Ascending aorta (tissue), 2 donors: ENCODE measurements at regions of chr5 and their contacts with region 1.

Region 1: DNA sequence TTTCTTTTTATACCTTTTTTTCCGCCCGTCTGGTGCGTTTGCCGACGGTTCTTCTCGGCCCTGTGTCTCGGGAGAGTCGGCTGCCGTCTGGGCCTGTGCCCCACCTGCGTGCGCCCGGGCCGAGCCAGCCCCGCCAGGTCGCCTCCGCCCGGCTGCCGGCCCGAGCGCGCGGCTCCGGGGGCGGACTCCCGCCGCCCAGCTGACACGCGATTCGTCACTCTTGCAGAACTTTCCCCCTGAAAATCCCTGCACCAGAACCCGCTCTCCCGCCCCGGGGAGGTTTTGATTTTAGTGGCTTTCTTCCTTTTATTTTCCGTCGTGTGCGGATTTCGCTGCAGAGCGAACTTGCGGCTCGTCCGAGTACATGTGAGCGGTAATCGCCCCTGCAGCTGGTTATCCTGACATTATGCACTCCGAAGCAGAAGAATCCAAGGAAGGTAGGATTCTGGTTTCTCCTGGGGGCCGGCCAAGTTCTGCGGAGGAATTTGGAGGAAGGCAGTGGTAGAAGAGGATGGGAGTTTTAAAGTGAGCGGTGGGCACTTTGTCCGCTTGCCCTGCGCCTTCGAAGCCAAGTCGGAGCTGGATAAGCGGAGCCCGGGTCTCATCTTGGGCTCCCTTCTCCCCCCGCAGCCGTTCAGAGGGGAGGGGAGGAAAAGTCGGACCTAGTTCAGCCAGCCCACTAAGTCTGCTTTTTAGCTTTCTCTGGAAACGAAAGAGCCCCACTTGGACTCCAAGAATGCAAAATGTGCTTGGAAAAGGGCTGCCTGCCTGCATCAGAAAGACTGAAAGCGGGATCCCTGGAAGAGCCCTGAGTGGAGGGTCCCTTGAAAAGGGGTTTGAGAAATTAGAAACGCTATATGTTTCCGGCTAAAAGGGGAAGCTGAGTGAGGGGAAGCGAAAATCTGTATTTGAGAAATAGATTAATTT is at the start of gene TNFAIP8:
- DNase-seq: peak in 1 of 2 donors; percentile 83
- H3K4me3 ChIP-seq: peak within 1 kb of the TSS; percentile 74 to 87
- H3K27ac ChIP-seq: peak within 1 kb of the TSS; percentile 73
- H3K4me1 ChIP-seq: peaks cover 4 to 15% of the 10 kb centered on the region in 2 donors
- H3K27me3 ChIP-seq: no peaks in the 10 kb centered on the region
- CTCF ChIP-seq: no peak
- total RNA-seq, gene TNFAIP8: 3.5 TPM

Region 2: GRCh38 chr5:119367502-119368237 is 11.7 kb after region 1 on chr5:
- intact Hi-C with region 1: no loop called
- DNase-seq: no peak
- H3K4me3 ChIP-seq: no peak overlapping the region
- H3K27ac ChIP-seq: peak overlapping the region; percentile 48 to 76
- H3K4me1 ChIP-seq: peaks cover 4 to 45% of the 10 kb centered on the region in 2 donors
- H3K27me3 ChIP-seq: no peaks in the 10 kb centered on the region
- CTCF ChIP-seq: no peak

Region 3: DNA sequence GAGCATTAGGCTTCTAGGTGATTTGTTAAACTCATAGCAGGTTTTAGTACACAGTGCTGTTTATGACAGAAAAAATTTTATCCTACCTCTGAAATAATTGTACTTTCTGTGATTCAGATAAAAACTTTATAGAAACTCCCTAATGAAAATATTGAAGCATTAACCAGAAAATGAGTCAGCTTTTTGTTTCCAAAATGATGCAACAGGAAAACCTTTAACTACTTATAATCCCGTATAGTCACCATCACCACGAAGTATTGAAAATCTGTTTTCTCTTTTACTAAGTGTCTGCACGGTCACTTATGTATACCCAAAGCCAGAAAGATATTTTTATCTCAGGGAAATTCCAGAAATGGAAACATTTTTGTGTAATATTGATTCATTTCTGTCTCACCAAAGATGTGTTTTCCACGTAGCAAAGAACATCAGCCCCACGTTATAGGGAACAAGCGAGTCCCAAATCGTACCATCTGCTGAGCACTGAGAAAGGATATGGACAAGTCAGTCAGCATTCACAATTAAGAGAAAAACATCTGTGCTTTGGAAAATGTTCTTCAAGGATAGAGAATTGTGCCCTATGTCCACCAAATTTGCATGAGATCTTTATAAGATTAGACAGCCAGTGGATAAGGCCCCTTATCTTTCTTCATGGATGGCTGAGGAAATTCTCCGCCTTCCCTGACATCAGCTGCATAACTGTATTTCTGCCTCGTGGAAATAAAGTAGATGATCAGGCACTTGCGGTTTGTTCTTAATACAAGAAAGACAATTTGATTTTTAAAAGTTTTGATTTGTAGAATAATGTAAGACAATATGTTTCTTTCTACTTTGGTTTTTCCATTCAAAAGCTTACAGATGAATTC is 41.8 kb after region 1 on chr5:
- intact Hi-C with region 1: loop called (anchors 2 kb)
- DNase-seq: no peak
- H3K4me3 ChIP-seq: peak overlapping the region in 1 of 2 donors; percentile 18
- H3K27ac ChIP-seq: no peak overlapping the region
- H3K4me1 ChIP-seq: peaks cover 0 to 14% of the 10 kb centered on the region in 2 donors
- H3K27me3 ChIP-seq: no peaks in the 10 kb centered on the region
- CTCF ChIP-seq: no peak